ENCODE measurements at regions of chr2 and their contacts with region 1.

Region 1: DNA sequence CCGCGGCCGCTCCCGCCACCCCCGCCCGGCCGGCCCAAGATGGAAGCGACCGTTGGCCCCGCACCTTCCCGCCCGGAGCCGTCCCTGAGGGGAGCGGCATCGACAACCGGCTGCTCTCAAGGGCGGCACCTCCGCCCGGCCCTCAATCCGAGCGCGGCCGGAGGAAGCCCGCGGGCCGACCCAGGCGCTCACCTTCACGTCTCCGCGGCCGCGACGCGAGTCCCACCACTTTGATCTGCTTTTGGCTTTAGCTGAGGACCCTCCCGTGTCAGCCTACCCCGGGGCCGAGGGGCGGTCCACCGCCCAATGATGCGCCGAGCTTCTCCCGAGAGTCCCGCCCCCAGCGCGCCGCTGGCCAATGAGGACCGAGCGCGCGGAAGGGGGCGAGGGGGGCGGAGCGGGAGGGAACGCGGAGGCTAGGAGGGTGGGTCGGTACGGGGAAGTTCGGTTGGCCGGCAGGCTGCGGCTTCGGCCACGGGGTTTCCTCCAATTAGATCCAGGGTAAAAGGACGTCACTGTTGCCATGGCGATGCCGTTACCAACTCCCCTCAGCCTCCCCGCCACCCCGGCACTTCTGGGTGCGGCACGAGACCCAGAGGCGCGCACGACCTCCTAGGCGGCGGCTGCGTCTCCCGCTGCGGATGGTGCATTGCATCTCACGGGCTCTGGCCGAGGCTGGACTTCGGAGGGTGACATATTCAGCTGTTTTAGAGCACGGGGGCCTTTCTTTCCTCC is at the start of gene YWHAQ:
- DNase-seq: peak; percentile 98
- H3K4me3 Mint-ChIP-seq: peak within 1 kb of the TSS; percentile 93
- H3K27ac Mint-ChIP-seq: peak within 1 kb of the TSS; percentile 91
- H3K4me1 Mint-ChIP-seq: peaks cover 46% of the 10 kb centered on the region
- H3K27me3 Mint-ChIP-seq: peaks cover 2% of the 10 kb centered on the region
- total RNA-seq, gene YWHAQ: 335 to 351 TPM

Region 2: DNA sequence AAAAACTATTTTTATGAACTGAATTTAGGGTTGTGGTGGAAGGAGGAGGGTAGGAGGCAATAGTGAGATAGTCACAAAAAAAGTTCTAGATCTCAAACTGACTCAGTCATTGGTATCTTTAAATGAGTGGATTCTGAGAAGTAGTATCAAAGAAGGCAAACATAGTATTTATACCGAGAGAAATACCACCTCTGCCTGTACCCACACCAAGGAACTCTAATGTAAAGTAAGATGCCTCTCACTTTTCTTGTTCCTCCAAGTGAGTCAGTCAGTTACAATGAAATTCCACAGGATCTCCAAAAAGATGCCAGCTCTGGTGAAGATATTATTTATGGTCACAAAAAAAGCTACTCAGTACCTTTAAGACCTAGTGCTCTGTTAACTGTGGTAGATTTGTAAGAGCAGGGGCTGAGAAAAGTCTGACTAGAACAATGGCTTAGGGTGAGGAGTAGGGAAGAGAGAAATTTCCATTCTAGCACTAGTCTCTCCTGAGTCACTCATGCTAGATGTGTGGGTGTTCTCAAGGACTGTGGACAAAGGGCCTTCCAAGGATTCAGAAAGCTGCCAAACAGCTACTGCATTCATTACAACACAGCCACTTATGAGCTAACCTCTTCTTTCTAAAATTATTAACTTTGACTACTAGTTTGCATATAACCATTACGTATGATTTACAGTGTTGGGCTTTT is 36.4 kb before region 1 on chr2:
- CTCF ChIA-PET with region 1: interaction called, 3 read pairs
- POLR2A ChIA-PET with region 1: interaction called, 21 read pairs
- DNase-seq: no peak
- H3K4me3 Mint-ChIP-seq: peak overlapping the region; percentile 22
- H3K27ac Mint-ChIP-seq: peak overlapping the region; percentile 66
- H3K4me1 Mint-ChIP-seq: peaks cover 65% of the 10 kb centered on the region
- H3K27me3 Mint-ChIP-seq: no peaks in the 10 kb centered on the region

Region 3: DNA sequence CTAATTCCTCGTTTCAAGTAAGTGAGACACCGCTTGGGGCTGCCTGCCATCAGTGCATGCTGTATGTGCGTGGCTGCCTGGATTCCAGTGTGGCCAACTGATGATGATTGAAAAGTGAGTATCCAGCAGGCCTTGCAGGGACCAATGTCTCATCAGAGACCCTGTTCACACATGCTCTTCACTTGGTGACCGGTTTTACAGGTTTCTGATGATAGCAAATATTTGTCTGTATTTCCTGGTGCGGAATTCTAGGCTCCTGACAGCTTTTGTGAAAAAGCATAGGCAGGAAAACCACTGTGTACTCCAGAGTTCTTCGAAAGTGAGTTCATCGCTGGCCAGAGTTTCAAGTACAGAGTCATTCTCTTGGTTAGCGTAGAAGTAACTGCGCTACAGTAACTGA is 13.7 kb after region 1 on chr2:
- CTCF ChIA-PET with region 1: no interaction called
- POLR2A ChIA-PET with region 1: interaction called, 45 read pairs
- DNase-seq: no peak
- H3K4me3 Mint-ChIP-seq: no peak overlapping the region
- H3K27ac Mint-ChIP-seq: no peak overlapping the region
- H3K4me1 Mint-ChIP-seq: peaks cover 47% of the 10 kb centered on the region
- H3K27me3 Mint-ChIP-seq: peaks cover 8% of the 10 kb centered on the region

Region 4: DNA sequence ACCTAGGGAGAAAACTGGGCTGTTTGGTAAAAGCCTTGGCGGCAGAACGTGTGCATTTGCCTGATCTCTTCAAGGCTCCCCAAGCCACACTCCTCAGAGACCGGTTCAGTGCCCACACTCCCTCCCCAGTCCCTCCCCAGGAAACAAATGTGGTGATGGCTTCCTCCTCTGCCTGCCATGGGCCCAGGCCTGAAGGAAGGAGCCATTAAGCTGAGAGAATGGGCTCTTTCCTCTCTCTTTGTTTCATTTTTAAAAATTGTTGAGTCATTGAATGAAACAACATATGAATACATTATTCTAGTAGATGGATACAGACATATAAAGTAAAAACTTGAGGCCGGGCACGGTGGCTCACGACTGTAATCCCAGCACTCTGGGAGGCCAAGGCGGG is 50.5 kb after region 1 on chr2:
- CTCF ChIA-PET with region 1: no interaction called
- POLR2A ChIA-PET with region 1: interaction called, 17 read pairs
- DNase-seq: peak; percentile 70
- H3K4me3 Mint-ChIP-seq: no peak overlapping the region
- H3K27ac Mint-ChIP-seq: peak overlapping the region; percentile 89
- H3K4me1 Mint-ChIP-seq: peaks cover 22% of the 10 kb centered on the region
- H3K27me3 Mint-ChIP-seq: peaks cover 1% of the 10 kb centered on the region

Region 5: DNA sequence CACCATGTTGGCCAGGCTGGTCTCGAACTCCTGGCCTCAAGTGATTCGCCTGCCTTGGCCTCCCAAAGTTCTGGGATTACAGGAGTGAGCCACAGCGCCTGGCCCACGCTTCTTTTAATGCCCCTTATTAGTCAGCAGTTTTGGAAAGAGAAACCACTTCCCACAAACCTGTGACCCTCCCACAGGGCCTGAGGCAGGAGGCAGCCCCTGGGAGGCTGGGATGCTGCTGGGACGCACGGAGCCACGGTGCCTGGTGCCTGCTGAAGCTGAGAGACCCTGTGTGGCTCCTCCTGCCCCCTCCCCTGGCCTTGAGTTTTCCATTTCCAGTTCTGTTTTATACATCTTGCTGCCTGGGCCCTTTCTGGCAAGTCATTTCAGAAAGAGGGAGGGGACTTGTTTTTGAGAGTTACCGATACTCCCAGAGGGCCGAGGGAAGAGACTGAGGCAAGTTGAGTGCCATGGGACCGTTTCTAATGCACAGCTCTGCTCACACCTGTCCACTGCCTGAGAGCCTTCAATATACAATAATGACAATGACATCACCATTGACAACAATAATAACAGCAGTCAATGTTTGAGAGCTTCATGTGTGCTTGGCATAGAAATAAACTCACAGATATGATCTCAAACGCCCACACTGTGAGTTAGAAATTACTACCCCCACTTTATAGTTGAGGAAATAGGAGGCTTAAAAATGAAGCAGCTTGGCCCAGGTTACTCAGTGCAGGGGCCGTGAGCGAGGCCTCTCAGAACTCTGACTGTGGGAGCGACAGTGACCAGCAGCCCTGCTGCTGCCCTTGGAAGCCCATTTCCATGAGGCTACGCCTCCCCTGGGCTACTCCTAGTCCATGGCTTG is 78.0 kb after region 1 on chr2:
- CTCF ChIA-PET with region 1: interaction called, 14 read pairs
- POLR2A ChIA-PET with region 1: interaction called, 99 read pairs
- DNase-seq: no peak
- H3K4me3 Mint-ChIP-seq: no peak overlapping the region
- H3K27ac Mint-ChIP-seq: peak overlapping the region; percentile 79
- H3K4me1 Mint-ChIP-seq: peaks cover 80% of the 10 kb centered on the region
- H3K27me3 Mint-ChIP-seq: no peaks in the 10 kb centered on the region

Region 6: DNA sequence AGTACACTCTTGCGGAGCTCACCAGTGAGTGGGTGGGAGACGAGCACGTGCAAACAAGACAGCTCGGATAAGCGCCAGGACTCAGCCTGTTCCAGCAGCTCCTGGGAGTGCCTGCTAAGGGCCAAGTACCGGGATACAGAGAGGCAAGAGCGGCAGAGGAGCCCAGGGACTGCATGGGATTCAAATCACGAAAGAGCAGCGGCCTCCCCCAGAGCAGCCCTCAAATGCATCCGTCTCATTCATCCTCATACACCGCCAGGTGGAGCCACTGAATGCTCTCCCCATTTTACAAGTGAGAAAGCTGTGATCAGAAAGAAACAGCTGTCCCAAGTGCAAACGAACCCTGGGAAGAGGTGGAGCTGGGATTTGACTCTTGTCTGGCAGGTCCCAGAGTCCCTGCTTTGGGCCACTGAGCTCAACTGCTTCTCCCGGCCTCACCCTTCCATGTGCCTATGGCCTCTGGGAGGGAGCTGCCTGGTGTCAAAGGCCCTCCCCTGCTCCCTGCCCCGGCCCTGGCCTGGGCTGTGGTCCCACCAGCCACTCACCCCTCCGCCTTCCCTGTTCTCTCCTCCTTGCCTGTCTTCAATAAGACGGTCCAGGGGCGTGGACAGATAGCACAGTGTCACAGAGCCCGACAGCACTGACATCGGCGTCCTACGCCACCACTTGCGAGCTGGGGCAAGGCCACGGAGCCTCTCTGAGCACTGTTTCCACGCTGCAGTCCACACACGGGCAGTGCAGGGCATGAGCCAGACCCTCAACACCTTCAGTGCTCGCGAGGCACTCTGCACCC is 139.6 kb after region 1 on chr2:
- CTCF ChIA-PET with region 1: interaction called, 16 read pairs
- POLR2A ChIA-PET with region 1: interaction called, 7 read pairs
- DNase-seq: peak; percentile 73
- H3K4me3 Mint-ChIP-seq: no peak overlapping the region
- H3K27ac Mint-ChIP-seq: no peak overlapping the region
- H3K4me1 Mint-ChIP-seq: peaks cover 21% of the 10 kb centered on the region
- H3K27me3 Mint-ChIP-seq: no peaks in the 10 kb centered on the region

Region 7: DNA sequence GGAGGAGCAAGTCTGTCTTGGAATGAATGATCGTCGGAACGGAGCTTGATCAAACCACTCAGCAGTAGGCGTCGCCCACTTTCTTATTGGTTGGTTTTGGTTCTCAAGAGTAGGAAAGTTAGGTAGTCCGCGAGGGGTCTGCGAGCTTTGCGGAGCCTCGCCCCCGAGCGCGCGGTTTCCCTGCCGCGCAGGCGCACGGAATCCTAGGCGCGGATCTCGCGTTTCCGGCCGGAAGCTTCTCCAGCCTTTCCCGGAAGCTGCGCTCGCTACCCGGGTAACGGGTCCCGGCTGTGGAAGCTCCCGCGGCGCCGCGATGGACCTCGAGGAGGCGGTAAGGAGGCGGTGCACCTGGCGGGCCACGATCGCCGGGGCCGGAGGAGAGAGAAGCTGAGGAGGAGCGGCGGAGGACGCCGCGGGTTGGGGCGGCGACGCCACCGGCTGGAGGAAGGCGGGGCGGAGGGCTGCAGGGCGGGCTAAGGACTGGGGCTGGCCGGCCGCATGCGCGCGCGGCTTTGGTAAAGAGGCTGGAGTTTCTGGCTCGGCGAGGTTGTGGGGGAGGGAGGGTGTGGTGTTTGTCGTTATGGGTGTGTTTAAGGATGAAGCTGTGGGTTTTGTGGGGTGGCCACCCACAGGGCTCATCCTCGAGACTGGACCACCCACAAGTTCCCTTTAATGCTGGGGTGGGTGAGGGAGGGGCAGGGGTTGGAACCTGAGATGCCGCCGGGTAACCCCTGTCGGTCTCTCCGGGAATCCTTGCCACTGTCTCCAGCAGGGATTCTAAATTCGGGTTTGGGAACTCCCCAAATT is 212.5 kb after region 1 on chr2 and contains the start of gene TAF1B:
- CTCF ChIA-PET with region 1: interaction called, 3 read pairs
- POLR2A ChIA-PET with region 1: interaction called, 13 read pairs
- DNase-seq: peak; percentile 91
- H3K4me3 Mint-ChIP-seq: peak within 1 kb of the TSS; percentile 87
- H3K27ac Mint-ChIP-seq: peak within 1 kb of the TSS; percentile 87
- H3K4me1 Mint-ChIP-seq: peaks cover 49% of the 10 kb centered on the region
- H3K27me3 Mint-ChIP-seq: no peaks in the 10 kb centered on the region
- total RNA-seq, gene TAF1B: 49.4 to 54.7 TPM

Measured in activated CD4-positive, alpha-beta memory T cell treated with anti-CD3 and anti-CD28 coated beads, Interleukin-2, amount 10 ng/mL, durations not matched to agents 7 days and 5 days (primary cell).